ENCODE measurements at regions of chr5 and their contacts with region 1.

Region 1: DNA sequence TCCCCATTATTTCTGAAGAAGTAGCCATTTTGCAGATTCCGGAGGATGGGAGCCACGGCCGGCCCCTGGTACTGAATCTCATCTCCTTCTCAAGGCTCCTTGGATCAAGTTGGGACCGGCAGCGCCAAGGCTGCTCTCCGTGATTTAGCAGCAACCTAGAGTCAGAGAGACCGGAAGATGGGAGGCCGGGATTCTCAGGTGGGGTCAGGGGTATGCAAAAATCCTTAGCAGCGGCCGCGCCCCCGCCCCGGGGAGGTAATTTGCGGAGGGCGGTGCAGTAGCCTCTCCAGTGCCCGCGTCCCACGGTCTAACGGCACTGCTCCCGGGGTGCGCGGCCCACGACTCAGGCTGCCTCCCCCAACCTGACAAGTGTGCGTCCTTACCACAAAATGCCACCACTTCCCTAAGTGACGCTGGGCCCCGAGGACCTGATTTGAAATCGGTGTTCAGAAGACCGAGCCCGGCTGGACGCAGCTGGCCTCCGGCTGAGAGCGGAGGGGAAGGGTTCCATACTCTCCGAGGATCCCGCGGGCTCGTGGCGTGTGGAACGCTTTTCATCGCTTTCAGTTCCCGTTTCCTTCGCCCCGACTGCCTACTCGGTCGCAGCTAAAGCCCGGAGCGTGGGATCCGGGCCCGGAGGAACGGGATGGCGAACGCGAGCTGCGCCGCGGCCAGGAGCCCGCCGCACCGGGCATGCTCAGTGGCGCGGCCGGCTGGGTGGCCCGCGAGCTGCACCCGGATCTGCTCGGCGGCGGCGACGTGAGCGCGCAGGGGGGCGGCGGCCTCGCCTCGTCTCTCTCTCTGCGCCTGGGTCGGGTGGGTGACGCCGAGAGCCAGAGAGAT is at the start of gene SCAMP1:
- DNase-seq: peak; percentile 91

Region 2: DNA sequence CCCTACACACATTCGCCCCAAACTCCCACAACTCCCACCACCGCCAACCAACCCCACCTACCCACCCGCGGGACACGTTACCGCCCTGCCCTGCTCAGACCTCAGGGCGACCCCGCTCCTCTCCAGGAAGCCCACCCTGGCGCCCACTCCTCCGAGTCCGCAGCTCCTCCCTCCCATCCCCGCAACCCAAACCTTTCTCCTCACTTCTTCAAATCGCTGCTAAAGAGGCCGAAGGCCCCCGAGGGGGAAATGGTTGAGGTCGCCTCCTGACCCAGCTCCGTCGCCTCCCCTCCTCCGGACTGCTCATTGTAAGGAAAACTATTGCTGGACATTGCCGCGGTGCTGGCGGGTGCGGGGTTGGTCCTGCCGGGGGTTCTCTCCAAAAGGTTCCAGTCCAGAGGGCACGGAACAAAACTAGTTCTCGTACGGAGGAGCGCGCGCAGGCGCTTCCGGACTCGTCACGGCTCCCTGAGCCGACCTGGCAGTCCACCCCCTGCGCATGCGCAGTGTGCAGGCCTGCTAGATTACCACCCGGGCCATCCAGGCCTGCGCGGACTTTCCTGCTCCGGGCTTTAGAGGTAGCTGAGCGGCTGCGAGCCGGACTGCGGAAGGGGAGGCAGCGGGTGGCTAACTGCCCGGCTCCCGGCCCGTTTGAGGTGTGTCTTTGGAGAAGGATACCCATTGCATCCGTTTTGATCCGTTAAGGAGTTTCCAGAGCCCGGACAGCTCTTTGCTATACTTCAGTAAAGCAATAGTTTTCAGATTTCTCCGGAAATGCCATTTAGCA is 65.6 kb before region 1 on chr5 and contains the start of gene AP3B1:
- CTCF ChIA-PET with region 1: interaction called, 3 read pairs
- POLR2A ChIA-PET with region 1: interaction called, 36 read pairs
- DNase-seq: peak; percentile 98